ENCODE measurements at regions of chr5 and their contacts with region 1.

Region 1: GRCh38 chr5:109688971-109689739 is 572 bp upstream of the MAN2A1 start:
- DNase-seq: peak; percentile 89
- H3K4me3 ChIP-seq: peak overlapping the region; percentile 66 to 90 (median 86)
- H3K27ac ChIP-seq: peak overlapping the region; percentile 78
- H3K4me1 ChIP-seq: peaks cover 15% of the 10 kb centered on the region
- H3K27me3 ChIP-seq: no peaks in the 10 kb centered on the region
- CTCF ChIP-seq: no peak

Region 2: DNA sequence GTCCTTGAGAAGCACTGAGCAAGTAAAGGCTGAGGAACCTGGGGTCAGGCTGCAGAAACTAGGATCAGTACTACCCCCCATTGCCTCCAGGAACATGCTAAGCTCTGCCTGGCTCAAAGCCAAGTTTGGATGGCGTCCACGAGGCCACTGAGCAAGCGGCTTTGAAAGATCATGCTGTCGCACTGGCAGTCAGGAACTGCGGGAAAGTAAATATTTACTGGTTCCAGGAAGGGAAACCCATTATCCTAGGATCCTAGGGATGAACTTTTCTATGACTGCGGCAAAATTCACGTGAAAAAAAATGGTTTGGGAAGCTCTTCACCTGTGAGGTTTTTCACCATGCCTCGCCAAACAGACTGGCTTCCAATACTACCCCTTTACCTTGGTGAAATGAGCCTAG is 204.1 kb before region 1 on chr5:
- CTCF ChIA-PET with region 1: no interaction called
- dilution Hi-C with region 1: no loop called
- in situ Hi-C with region 1: no loop called
- intact Hi-C with region 1: loop called (anchors 10 kb)
- DNase-seq: no peak
- H3K4me3 ChIP-seq: no peak overlapping the region
- H3K27ac ChIP-seq: no peak overlapping the region
- H3K4me1 ChIP-seq: no peaks in the 10 kb centered on the region
- H3K27me3 ChIP-seq: no peaks in the 10 kb centered on the region
- CTCF ChIP-seq: no peak

Region 3: GRCh38 chr5:109589986-109590385 is 99.2 kb before region 1 on chr5:
- CTCF ChIA-PET with region 1: no interaction called
- dilution Hi-C with region 1: no loop called
- in situ Hi-C with region 1: no loop called
- intact Hi-C with region 1: loop called (anchors 5 kb)
- DNase-seq: peak; percentile 9
- H3K4me3 ChIP-seq: no peak overlapping the region
- H3K27ac ChIP-seq: no peak overlapping the region
- H3K4me1 ChIP-seq: no peaks in the 10 kb centered on the region
- H3K27me3 ChIP-seq: no peaks in the 10 kb centered on the region
- CTCF ChIP-seq: peak in 1 of 2 donors; percentile 32

Region 4: GRCh38 chr5:109739741-109740728 is 50.9 kb after region 1 on chr5:
- CTCF ChIA-PET with region 1: no interaction called
- dilution Hi-C with region 1: no loop called
- in situ Hi-C with region 1: no loop called
- intact Hi-C with region 1: loop called (anchors 1 kb)
- DNase-seq: peak; percentile 58
- H3K4me3 ChIP-seq: no peak overlapping the region
- H3K27ac ChIP-seq: peak overlapping the region; percentile 25
- H3K4me1 ChIP-seq: peaks cover 36% of the 10 kb centered on the region
- H3K27me3 ChIP-seq: no peaks in the 10 kb centered on the region
- CTCF ChIP-seq: no peak

Region 5: GRCh38 chr5:109826426-109826825 is 137.3 kb after region 1 on chr5:
- CTCF ChIA-PET with region 1: no interaction called
- dilution Hi-C with region 1: no loop called
- in situ Hi-C with region 1: no loop called
- intact Hi-C with region 1: loop called (anchors 5 kb)
- DNase-seq: peak; percentile 77
- H3K4me3 ChIP-seq: no peak overlapping the region
- H3K27ac ChIP-seq: no peak overlapping the region
- H3K4me1 ChIP-seq: peaks cover 25% of the 10 kb centered on the region
- H3K27me3 ChIP-seq: no peaks in the 10 kb centered on the region
- CTCF ChIP-seq: no peak

Region 6: GRCh38 chr5:109844148-109844547 is 155.0 kb after region 1 on chr5:
- CTCF ChIA-PET with region 1: interaction called, 3 read pairs
- dilution Hi-C with region 1: no loop called
- in situ Hi-C with region 1: no loop called
- intact Hi-C with region 1: loop called (anchors 1 kb)
- DNase-seq: no peak
- H3K4me3 ChIP-seq: no peak overlapping the region
- H3K27ac ChIP-seq: no peak overlapping the region
- H3K4me1 ChIP-seq: no peaks in the 10 kb centered on the region
- H3K27me3 ChIP-seq: no peaks in the 10 kb centered on the region
- CTCF ChIP-seq: peak; percentile 30 to 37

Region 7: DNA sequence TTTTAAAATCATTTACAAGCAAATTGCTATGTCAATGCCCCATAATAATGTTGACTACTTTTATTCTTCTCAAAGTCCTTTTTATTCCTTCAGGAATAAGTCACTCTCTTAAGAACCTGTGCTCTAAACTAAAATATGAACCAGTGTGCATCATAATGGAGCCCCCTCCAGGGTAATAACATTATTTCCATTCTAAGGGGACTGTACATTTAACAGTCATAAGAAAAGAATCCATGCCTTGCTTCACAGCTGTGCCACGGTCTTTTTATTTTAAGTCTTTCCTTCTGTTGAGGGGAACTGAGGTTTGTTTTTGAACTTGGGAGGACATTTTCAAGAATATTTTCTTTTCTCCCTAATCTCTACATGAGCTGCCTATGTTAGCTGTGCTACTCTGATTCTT is 298.2 kb after region 1 on chr5:
- CTCF ChIA-PET with region 1: no interaction called
- dilution Hi-C with region 1: no loop called
- in situ Hi-C with region 1: no loop called
- intact Hi-C with region 1: no loop called
- DNase-seq: no peak
- H3K4me3 ChIP-seq: no peak overlapping the region
- H3K27ac ChIP-seq: no peak overlapping the region
- H3K4me1 ChIP-seq: no peaks in the 10 kb centered on the region
- H3K27me3 ChIP-seq: no peaks in the 10 kb centered on the region
- CTCF ChIP-seq: no peak

Region 8: GRCh38 chr5:110045158-110045557 is 356.0 kb after region 1 on chr5:
- CTCF ChIA-PET with region 1: no interaction called
- dilution Hi-C with region 1: no loop called
- in situ Hi-C with region 1: no loop called
- intact Hi-C with region 1: loop called (anchors 2 kb)
- DNase-seq: peak; percentile 4
- H3K4me3 ChIP-seq: no peak overlapping the region
- H3K27ac ChIP-seq: no peak overlapping the region
- H3K4me1 ChIP-seq: no peaks in the 10 kb centered on the region
- H3K27me3 ChIP-seq: peaks cover 3% of the 10 kb centered on the region
- CTCF ChIP-seq: peak; percentile 32 to 57